ENCODE measurements at regions of chr3 and their contacts with region 1.

Region 1: DNA sequence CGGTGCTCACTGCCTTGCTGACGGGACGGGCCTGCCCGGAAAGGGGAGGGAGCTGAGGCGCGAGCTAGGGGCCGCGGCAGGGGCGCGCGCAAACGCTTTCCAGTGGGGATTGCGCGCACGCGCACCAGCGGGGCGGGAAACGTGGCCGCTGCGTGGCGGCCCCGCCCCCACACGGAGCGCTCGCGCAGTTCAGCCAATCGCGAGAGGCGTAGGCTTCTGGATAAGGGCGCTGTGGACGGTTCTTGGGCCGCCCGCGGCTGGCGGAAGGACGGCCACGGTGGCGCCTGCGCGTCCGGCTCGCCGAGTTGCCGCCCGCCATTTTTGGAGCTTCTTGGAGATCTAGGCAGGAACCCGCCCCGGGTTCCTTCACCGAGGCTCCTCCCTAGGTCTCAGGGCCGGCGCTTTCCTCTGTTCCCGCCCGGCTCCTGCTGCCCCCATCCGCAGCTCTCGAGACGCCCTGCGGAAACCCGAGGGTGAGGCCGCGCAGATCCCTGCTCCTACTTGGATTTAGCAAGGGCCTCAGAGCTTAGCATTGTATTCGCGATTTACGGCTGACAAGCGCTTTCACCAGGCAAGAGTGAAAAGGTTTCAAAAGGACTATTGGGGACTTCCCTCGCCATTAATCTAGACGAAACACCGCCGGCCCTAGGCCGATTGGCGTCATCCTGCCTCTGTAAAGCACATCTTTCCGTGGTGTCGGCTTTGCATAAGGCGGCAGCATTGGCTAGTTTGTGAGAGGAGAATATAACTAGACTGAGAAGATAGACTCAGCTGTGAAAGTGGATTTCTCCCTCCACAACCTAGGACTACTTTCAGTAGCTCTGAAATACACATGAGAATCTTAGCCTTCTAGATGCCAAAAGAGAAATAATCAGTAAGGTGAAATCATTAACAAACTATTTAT is 496 bp upstream of the STAG1 start:
- DNase-seq: peak; percentile 96
- H3K4me3 ChIP-seq: peak overlapping the region; percentile 71
- H3K27ac ChIP-seq: peak overlapping the region; percentile 99
- H3K27me3 ChIP-seq: no peaks in the 10 kb centered on the region
- CTCF ChIP-seq: peak; percentile 42

Region 2: DNA sequence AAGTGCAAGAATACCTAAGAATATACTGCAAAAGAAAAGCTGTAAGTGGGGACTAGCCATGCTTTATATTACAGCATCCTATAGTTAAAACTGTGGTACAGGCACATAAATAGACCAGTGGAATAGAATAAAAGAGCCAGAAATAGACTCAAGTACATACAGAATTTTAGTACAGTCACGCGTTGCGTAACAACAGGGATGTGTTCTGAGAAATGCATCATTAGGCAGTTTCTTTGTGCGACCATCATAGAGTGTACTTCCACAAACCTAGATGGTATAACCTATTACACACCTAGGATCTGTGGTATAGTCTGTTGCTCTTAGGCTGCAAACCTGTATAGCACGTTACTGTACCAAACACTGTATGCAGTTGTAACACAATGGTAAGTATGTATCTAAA is 440.7 kb before region 1 on chr3:
- CTCF ChIA-PET with region 1: interaction called, 99 read pairs
- POLR2A ChIA-PET with region 1: interaction called, 6 read pairs
- DNase-seq: no peak
- H3K4me3 ChIP-seq: no peak overlapping the region
- H3K27ac ChIP-seq: no peak overlapping the region
- H3K27me3 ChIP-seq: no peaks in the 10 kb centered on the region
- CTCF ChIP-seq: no peak

Region 3: GRCh38 chr3:136366289-136366688 is 386.4 kb before region 1 on chr3:
- CTCF ChIA-PET with region 1: interaction called, 10 read pairs
- POLR2A ChIA-PET with region 1: no interaction called
- DNase-seq: peak; percentile 10
- H3K4me3 ChIP-seq: no peak overlapping the region
- H3K27ac ChIP-seq: no peak overlapping the region
- H3K27me3 ChIP-seq: no peaks in the 10 kb centered on the region
- CTCF ChIP-seq: no peak

Region 4: GRCh38 chr3:136464502-136464901 is 288.2 kb before region 1 on chr3:
- CTCF ChIA-PET with region 1: interaction called, 11 read pairs
- POLR2A ChIA-PET with region 1: interaction called, 7 read pairs
- DNase-seq: peak; percentile 75
- H3K4me3 ChIP-seq: no peak overlapping the region
- H3K27ac ChIP-seq: peak overlapping the region; percentile 92
- H3K27me3 ChIP-seq: no peaks in the 10 kb centered on the region
- CTCF ChIP-seq: no peak

Region 5: GRCh38 chr3:136604961-136605360 is 147.7 kb before region 1 on chr3:
- CTCF ChIA-PET with region 1: interaction called, 13 read pairs
- POLR2A ChIA-PET with region 1: no interaction called
- DNase-seq: no peak
- H3K4me3 ChIP-seq: no peak overlapping the region
- H3K27ac ChIP-seq: no peak overlapping the region
- H3K27me3 ChIP-seq: no peaks in the 10 kb centered on the region
- CTCF ChIP-seq: no peak

Region 6: GRCh38 chr3:136787349-136787748 is 34.7 kb after region 1 on chr3:
- CTCF ChIA-PET with region 1: interaction called, 13 read pairs
- POLR2A ChIA-PET with region 1: interaction called, 10 read pairs
- DNase-seq: no peak
- H3K4me3 ChIP-seq: no peak overlapping the region; the same call in 1 of the 2 replicates
- H3K27ac ChIP-seq: peak overlapping the region; percentile 93
- H3K27me3 ChIP-seq: no peaks in the 10 kb centered on the region
- CTCF ChIP-seq: no peak

Region 7: GRCh38 chr3:137205394-137206045 is 452.8 kb after region 1 on chr3:
- CTCF ChIA-PET with region 1: no interaction called
- POLR2A ChIA-PET with region 1: no interaction called
- DNase-seq: no peak
- H3K4me3 ChIP-seq: no peak overlapping the region
- H3K27ac ChIP-seq: no peak overlapping the region
- H3K27me3 ChIP-seq: no peaks in the 10 kb centered on the region
- CTCF ChIP-seq: no peak